CD8-positive, alpha-beta T cell (primary cell): ENCODE measurements at regions of chr2 and their contacts with region 1.

Region 1: GRCh38 chr2:40087434-40087833 is 308.4 kb upstream of the THUMPD2 start:
- DNase-seq: no peak
- ATAC-seq: no peak
- H3K4me3 ChIP-seq: no peak overlapping the region
- H3K4me3 Mint-ChIP-seq: no peak overlapping the region
- H3K27ac ChIP-seq: no peak overlapping the region
- H3K27ac Mint-ChIP-seq: no peak overlapping the region
- H3K4me1 ChIP-seq: no peaks in the 10 kb centered on the region
- H3K4me1 Mint-ChIP-seq: no peaks in the 10 kb centered on the region
- H3K27me3 ChIP-seq: no peaks in the 10 kb centered on the region
- H3K27me3 Mint-ChIP-seq: peaks cover 2% of the 10 kb centered on the region
- CTCF ChIP-seq: no peak

Region 2: DNA sequence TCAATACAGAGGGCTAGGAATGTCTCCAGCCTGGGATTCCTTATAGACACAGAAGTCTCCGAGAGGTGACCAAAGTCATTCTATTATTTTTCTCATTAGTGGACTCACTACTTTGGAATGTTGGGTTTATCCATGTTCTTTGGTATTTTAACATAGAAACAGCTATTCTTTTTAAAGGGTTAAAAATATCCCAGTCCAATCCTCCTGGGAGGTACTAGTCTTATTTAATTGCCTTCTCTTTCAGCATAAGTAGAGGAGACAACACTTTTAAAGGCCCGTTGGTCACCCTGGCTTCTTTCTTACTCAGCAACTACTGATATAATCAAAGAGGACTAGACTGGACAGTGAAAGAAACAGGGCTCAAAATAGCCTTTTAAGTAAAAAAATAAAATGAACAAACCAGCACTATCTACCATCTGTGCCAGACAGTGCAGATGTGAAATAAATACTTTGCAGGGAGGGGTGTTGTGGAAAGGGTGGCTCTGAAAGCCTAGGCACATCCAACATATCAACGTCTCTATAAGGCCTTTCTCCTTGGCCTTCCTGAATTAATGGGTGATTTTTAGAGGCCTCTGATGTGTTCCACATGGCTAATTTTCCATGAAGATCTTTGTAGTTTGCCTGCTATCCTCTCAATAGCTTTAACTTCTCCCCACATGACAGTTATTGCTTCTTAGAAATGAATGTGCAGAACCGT is 26.0 kb after region 1 on chr2:
- CTCF ChIA-PET with region 1: no interaction called
- POLR2A ChIA-PET with region 1: no interaction called
- intact Hi-C with region 1: loop called in 1 of 2 experiments (anchors 1 kb)
- DNase-seq: no peak
- ATAC-seq: no peak
- H3K4me3 ChIP-seq: no peak overlapping the region
- H3K4me3 Mint-ChIP-seq: no peak overlapping the region
- H3K27ac ChIP-seq: no peak overlapping the region
- H3K27ac Mint-ChIP-seq: no peak overlapping the region
- H3K4me1 ChIP-seq: no peaks in the 10 kb centered on the region
- H3K4me1 Mint-ChIP-seq: no peaks in the 10 kb centered on the region
- H3K27me3 ChIP-seq: no peaks in the 10 kb centered on the region
- H3K27me3 Mint-ChIP-seq: no peaks in the 10 kb centered on the region
- CTCF ChIP-seq: no peak

Region 3: GRCh38 chr2:40150266-40150665 is 62.8 kb after region 1 on chr2:
- CTCF ChIA-PET with region 1: no interaction called
- POLR2A ChIA-PET with region 1: no interaction called
- intact Hi-C with region 1: loop called in 1 of 2 experiments (anchors 2 kb)
- DNase-seq: no peak
- ATAC-seq: no peak
- H3K4me3 ChIP-seq: no peak overlapping the region
- H3K4me3 Mint-ChIP-seq: no peak overlapping the region
- H3K27ac ChIP-seq: no peak overlapping the region
- H3K27ac Mint-ChIP-seq: no peak overlapping the region
- H3K4me1 ChIP-seq: no peaks in the 10 kb centered on the region
- H3K4me1 Mint-ChIP-seq: no peaks in the 10 kb centered on the region
- H3K27me3 ChIP-seq: no peaks in the 10 kb centered on the region
- H3K27me3 Mint-ChIP-seq: no peaks in the 10 kb centered on the region
- CTCF ChIP-seq: no peak